ENCODE measurements at regions of chr17 and their contacts with region 1.

Region 1: DNA sequence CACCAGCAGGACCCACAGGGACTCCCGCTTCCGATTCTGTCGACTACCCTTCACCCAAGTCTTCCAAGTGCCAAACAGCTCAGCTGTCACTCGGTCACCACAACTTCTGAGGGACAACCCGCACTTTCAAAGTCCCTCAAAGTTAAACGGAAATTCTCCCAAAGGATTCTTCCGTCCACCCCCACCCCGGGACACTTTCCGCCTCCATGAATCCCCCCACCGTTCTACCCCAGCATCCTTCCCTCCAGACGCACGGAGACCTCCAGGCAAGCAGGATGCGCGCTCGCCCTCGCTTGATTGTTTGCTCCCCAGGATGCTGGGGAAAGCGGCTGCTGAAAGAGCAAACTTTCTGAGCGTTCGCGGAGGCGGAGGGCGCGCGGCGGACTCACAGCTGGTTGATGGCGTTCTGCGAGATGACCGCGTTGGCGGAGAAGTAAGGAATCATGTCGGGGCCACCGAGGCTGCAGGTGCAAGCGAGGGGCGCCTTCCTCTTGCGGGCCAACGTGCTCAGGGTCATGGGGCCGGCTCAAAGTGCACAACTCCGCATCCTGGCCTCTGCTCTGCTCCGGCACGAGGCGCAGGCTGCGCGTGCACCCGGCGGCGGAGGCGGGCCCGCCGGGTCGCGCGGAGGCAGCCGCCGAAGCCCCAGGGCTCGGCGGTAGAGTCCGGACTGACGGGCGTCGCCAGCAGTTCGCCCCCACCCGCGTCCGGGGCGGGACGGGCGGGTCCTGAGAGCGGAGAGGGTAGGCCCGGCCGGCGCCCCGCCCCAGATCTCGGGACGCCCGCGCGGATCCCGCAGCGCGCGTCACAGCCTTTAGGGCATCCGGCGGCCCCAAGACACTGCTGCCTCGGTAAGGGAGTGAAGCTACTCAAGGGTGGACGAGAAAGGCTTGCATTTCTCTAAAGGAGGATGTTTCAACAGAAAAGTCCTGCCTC is 138.3 kb upstream of the CORO6 start:
- DNase-seq: peak; percentile 77 to 97 (median 88)
- ATAC-seq: peak; percentile 83
- H3K4me3 ChIP-seq: peak overlapping the region; percentile 91
- H3K4me3 Mint-ChIP-seq: peak overlapping the region; percentile 92
- H3K27ac ChIP-seq: peak overlapping the region; percentile 77 to 80
- H3K27ac Mint-ChIP-seq: peak overlapping the region; percentile 90
- H3K4me1 ChIP-seq: peaks cover 28% of the 10 kb centered on the region
- H3K4me1 Mint-ChIP-seq: peaks cover 41% of the 10 kb centered on the region
- H3K27me3 ChIP-seq: no peaks in the 10 kb centered on the region
- H3K27me3 Mint-ChIP-seq: no peaks in the 10 kb centered on the region
- CTCF ChIP-seq: no peak

Region 2: GRCh38 chr17:29568331-29569244 is 192.4 kb before region 1 on chr17 and contains the start of gene TP53I13:
- CTCF ChIA-PET with region 1: no interaction called
- POLR2A ChIA-PET with region 1: interaction called, 8 read pairs
- intact Hi-C with region 1: loop called in 1 of 2 experiments (anchors 5 kb)
- DNase-seq: peak; percentile 69 to 98 (median 92)
- ATAC-seq: peak; percentile 62
- H3K4me3 ChIP-seq: peak within 1 kb of the TSS; percentile 90
- H3K4me3 Mint-ChIP-seq: peak within 1 kb of the TSS; percentile 96
- H3K27ac ChIP-seq: peak within 1 kb of the TSS; percentile 61 to 70
- H3K27ac Mint-ChIP-seq: peak within 1 kb of the TSS; percentile 82
- H3K4me1 ChIP-seq: peaks cover 58% of the 10 kb centered on the region
- H3K4me1 Mint-ChIP-seq: peaks cover 35% of the 10 kb centered on the region
- H3K27me3 ChIP-seq: no peaks in the 10 kb centered on the region
- H3K27me3 Mint-ChIP-seq: no peaks in the 10 kb centered on the region
- CTCF ChIP-seq: no peak
- total RNA-seq, gene TP53I13: 45.8 to 47.7 TPM

Region 3: DNA sequence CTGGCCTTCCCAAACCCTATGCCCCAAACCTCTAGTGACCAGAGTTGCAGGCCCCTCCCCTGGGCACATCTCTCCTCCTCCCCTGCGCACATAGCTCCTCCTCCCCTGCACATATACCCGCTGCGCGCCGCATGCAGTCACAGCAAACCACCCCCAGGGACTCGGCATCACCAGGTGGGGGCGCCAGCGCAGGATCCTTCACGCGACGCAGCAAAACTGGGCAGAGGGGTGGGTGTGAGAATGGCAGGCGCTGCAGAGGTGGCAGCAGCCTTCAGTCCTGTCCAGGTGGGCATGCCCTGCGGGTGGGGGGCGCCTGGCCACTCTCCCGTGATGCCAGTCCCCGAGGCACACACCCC is 143.9 kb before region 1 on chr17:
- CTCF ChIA-PET with region 1: interaction called, 23 read pairs
- POLR2A ChIA-PET with region 1: interaction called, 40 read pairs
- intact Hi-C with region 1: loop called in 1 of 2 experiments (anchors 5 kb)
- DNase-seq: peak; percentile 81 to 96 (median 88)
- ATAC-seq: peak; percentile 69
- H3K4me3 ChIP-seq: peak overlapping the region; percentile 68
- H3K4me3 Mint-ChIP-seq: peak overlapping the region; percentile 91
- H3K27ac ChIP-seq: no peak overlapping the region
- H3K27ac Mint-ChIP-seq: peak overlapping the region; percentile 78
- H3K4me1 ChIP-seq: peaks cover 67% of the 10 kb centered on the region
- H3K4me1 Mint-ChIP-seq: peaks cover 47% of the 10 kb centered on the region
- H3K27me3 ChIP-seq: no peaks in the 10 kb centered on the region
- H3K27me3 Mint-ChIP-seq: no peaks in the 10 kb centered on the region
- CTCF ChIP-seq: peak; percentile 65

Region 4: DNA sequence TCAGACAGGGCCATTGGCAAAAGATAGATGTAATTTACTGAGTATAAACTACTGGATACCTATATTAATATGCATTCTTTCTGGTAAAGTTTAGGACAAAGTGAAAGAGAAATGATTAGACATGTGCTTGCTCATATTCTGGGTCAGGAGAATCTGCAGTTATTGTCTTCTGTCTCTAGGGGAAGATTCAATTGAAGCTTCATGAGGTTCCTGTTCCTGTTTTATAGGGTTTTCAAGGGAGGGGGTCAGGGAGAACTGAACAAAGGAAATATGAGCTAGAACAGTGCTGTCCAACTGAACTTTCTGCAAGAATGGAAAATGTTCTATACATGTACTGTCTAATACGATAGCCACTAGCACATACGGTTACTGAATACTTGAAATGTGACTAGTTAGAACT is 79.0 kb before region 1 on chr17:
- CTCF ChIA-PET with region 1: interaction called, 3 read pairs
- POLR2A ChIA-PET with region 1: interaction called, 7 read pairs
- intact Hi-C with region 1: loop called in 1 of 2 experiments (anchors 5 kb)
- DNase-seq: peak in 3 of 14 experiments; percentile 36 to 44 (median 42)
- ATAC-seq: peak; percentile 56
- H3K4me3 ChIP-seq: no peak overlapping the region
- H3K4me3 Mint-ChIP-seq: no peak overlapping the region
- H3K27ac ChIP-seq: peak overlapping the region in 1 of 2 donors; percentile 27
- H3K27ac Mint-ChIP-seq: peak overlapping the region; percentile 77
- H3K4me1 ChIP-seq: peaks cover 4% of the 10 kb centered on the region
- H3K4me1 Mint-ChIP-seq: peaks cover 24% of the 10 kb centered on the region
- H3K27me3 ChIP-seq: no peaks in the 10 kb centered on the region
- H3K27me3 Mint-ChIP-seq: no peaks in the 10 kb centered on the region
- CTCF ChIP-seq: no peak

Region 5: GRCh38 chr17:29710891-29711418 is 50.1 kb before region 1 on chr17:
- CTCF ChIA-PET with region 1: interaction called, 11 read pairs
- POLR2A ChIA-PET with region 1: interaction called, 97 read pairs
- intact Hi-C with region 1: loop called (anchors 1 to 2 kb)
- DNase-seq: peak in 1 of 14 experiments; percentile 23
- ATAC-seq: no peak
- H3K4me3 ChIP-seq: no peak overlapping the region
- H3K4me3 Mint-ChIP-seq: no peak overlapping the region
- H3K27ac ChIP-seq: no peak overlapping the region
- H3K27ac Mint-ChIP-seq: peak overlapping the region; percentile 92
- H3K4me1 ChIP-seq: peaks cover 29% of the 10 kb centered on the region
- H3K4me1 Mint-ChIP-seq: peaks cover 87% of the 10 kb centered on the region
- H3K27me3 ChIP-seq: no peaks in the 10 kb centered on the region
- H3K27me3 Mint-ChIP-seq: no peaks in the 10 kb centered on the region
- CTCF ChIP-seq: no peak

Region 6: GRCh38 chr17:29747660-29748059 is 13.4 kb before region 1 on chr17:
- CTCF ChIA-PET with region 1: no interaction called
- POLR2A ChIA-PET with region 1: interaction called, 14 read pairs
- intact Hi-C with region 1: loop called in 1 of 2 experiments (anchors 2 kb)
- DNase-seq: no peak
- ATAC-seq: no peak
- H3K4me3 ChIP-seq: no peak overlapping the region
- H3K4me3 Mint-ChIP-seq: no peak overlapping the region
- H3K27ac ChIP-seq: no peak overlapping the region
- H3K27ac Mint-ChIP-seq: peak overlapping the region; percentile 60
- H3K4me1 ChIP-seq: peaks cover 7% of the 10 kb centered on the region
- H3K4me1 Mint-ChIP-seq: peaks cover 78% of the 10 kb centered on the region
- H3K27me3 ChIP-seq: no peaks in the 10 kb centered on the region
- H3K27me3 Mint-ChIP-seq: no peaks in the 10 kb centered on the region
- CTCF ChIP-seq: no peak